ENCODE measurements at regions of chr5 and their contacts with region 1.

Region 1: GRCh38 chr5:33322632-33323031 is 118.1 kb upstream of the TARS1 start:
- DNase-seq: no peak
- ATAC-seq: no peak
- H3K4me3 ChIP-seq: no peak overlapping the region
- H3K27ac ChIP-seq: no peak overlapping the region
- H3K4me1 ChIP-seq: peaks cover 5 to 6% of the 10 kb centered on the region in 2 donors
- H3K27me3 ChIP-seq: no peaks in the 10 kb centered on the region

Region 2: DNA sequence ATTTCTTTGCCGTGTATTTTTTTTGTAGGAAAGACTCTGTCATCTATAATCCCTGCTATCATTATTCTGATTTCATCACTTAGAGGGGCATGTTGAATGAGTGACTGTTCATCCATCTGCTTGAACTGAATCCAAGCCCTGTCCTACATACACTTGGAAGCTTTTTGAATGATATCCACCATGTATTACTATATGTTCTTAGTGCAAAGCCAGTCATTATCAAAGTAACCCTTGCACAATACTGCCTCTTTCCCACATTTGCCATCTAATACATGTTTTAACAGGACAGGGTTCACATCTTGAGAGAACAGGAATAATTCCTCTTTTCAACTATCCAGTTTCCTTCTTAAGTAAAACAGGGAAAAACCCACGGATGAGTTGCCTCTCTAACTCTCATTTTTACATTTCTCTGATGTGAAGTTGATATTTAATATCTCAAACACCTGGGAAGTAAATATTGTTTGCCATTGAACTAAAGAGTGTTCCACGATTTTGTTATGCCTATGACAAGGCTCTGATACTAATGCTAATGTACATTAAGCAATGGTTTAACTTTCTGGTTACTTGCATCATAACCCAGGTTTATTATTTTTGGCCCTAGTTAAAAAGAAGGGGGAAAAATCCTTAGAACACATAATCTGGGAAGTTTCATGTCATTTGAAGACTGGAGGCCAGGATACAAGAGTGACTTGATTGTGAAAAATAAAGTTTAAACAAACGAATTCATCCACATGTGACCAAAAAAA is 14.4 kb after region 1 on chr5:
- intact Hi-C with region 1: loop called (anchors 2 kb)
- DNase-seq: no peak
- ATAC-seq: no peak
- H3K4me3 ChIP-seq: no peak overlapping the region
- H3K27ac ChIP-seq: no peak overlapping the region
- H3K4me1 ChIP-seq: peaks cover 7 to 9% of the 10 kb centered on the region in 2 donors
- H3K27me3 ChIP-seq: no peaks in the 10 kb centered on the region

Region 3: DNA sequence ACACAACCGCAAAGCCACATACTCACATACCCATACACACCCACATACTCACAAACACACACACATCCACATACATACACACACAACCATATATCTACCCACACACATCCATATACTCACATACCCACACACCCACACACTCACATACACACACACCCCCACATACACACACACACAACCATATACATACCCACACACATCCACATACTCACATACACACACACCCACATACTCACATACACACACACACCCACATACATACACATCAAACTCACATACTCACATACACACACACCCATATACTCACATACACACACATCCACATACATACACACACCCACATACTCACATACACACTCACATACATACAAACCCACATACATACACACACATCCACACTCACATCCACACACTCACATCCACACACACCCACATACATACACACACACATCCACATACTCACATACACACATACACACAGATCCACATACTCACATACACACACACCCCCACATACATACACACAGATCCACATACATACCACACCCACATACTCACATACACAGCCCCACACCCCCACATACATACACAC is 349.2 kb after region 1 on chr5:
- intact Hi-C with region 1: no loop called
- DNase-seq: no peak
- ATAC-seq: no peak
- H3K4me3 ChIP-seq: no peak overlapping the region
- H3K27ac ChIP-seq: no peak overlapping the region
- H3K4me1 ChIP-seq: no peaks in the 10 kb centered on the region
- H3K27me3 ChIP-seq: no peaks in the 10 kb centered on the region